ENCODE measurements at regions of chr4 and their contacts with region 1.

Region 1: GRCh38 chr4:174193438-174194374 is 89.8 kb downstream of the FBXO8 start:
- DNase-seq: no peak
- H3K4me3 ChIP-seq: no peak overlapping the region
- H3K27ac ChIP-seq: no peak overlapping the region
- H3K4me1 ChIP-seq: no peaks in the 10 kb centered on the region
- H3K27me3 ChIP-seq: no peaks in the 10 kb centered on the region
- CTCF ChIP-seq: no peak
- POLR2A ChIP-seq: no peak

Region 2: DNA sequence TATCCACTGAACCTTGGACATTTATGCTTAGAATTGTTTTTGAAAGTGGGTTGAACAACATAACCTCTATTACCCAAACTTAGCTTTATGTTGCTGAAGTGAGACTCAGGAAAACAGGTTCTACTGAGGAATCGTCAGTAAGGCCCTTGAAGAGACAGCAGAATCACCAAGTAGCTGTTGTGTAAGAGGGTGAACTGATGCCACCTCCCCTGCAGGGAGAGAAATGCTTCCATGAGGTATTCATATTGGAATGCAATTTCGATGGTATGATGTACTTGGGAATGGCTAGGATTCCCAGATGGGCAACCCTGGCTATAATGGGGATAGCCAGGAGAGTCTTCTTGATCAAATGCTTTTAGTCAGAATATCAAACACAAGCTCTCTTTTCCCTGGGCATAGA is 790.7 kb before region 1 on chr4:
- intact Hi-C with region 1: loop called (anchors 5 kb)
- DNase-seq: no peak
- H3K4me3 ChIP-seq: no peak overlapping the region
- H3K27ac ChIP-seq: no peak overlapping the region
- H3K4me1 ChIP-seq: no peaks in the 10 kb centered on the region
- H3K27me3 ChIP-seq: no peaks in the 10 kb centered on the region
- CTCF ChIP-seq: no peak
- POLR2A ChIP-seq: no peak

Measured in breast epithelium (tissue), 4 donors.